ENCODE measurements at regions of chr10 and their contacts with region 1.

Region 1: DNA sequence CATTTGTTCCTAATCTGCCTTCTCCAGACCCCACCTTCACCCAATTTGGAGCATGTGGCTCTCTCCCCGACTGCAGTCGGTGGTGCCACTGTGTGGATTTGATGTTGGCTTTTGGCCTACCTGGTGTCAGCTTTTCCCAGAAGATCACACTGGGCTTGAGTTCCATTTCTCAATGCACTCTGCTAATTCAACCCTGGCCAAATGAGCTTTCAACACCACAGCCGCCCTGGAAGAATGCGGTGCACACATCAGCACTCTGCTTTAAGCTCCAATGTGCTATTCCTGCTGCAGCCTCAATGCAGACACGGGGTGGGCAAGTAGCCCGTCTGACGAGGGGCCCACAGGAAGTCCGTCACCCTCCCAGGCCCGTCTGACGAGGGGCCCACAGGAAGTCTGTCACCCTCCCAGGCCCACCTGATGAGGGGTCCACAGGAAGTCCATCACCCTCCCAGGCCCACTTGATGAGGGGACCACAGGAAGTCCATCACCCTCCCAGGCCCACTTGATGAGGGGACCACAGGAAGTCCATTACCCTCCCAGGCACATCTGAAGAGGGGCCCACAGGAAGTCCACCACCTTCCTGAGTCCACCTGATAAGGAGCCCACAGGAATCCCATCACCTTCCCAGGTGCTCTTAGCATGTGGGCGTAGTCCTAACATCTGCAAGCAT is 64.4 kb downstream of the ASB13 start:
- DNase-seq: no peak
- H3K4me3 ChIP-seq: no peak overlapping the region
- H3K27ac ChIP-seq: no peak overlapping the region
- H3K4me1 ChIP-seq: no peaks in the 10 kb centered on the region
- H3K27me3 ChIP-seq: no peaks in the 10 kb centered on the region
- CTCF ChIP-seq: no peak
- EP300 ChIP-seq: no peak
- POLR2A ChIP-seq: no peak
- RAD21 ChIP-seq: no peak

Region 2: GRCh38 chr10:5589715-5590521 is 12.0 kb before region 1 on chr10:
- CTCF ChIA-PET with region 1: interaction called, 10 read pairs
- POLR2A ChIA-PET with region 1: interaction called, 4 read pairs
- DNase-seq: no peak
- H3K4me3 ChIP-seq: no peak overlapping the region
- H3K27ac ChIP-seq: no peak overlapping the region
- H3K4me1 ChIP-seq: peaks cover 8 to 24% (median 17%) of the 10 kb centered on the region in 4 experiments
- H3K27me3 ChIP-seq: no peaks in the 10 kb centered on the region; a peak in 1 of 7 replicates
- CTCF ChIP-seq: peak in 1 of 3 experiments; percentile 20; a peak in 1 of 4 replicates
- EP300 ChIP-seq: no peak
- POLR2A ChIP-seq: no peak
- RAD21 ChIP-seq: no peak